ENCODE measurements at regions of chr6 and their contacts with region 1.

Region 1: GRCh38 chr6:143745166-143746133 is 67.7 kb downstream of the PHACTR2 start:
- DNase-seq: no peak

Region 2: GRCh38 chr6:143700684-143701348 is 44.6 kb before region 1 on chr6:
- intact Hi-C with region 1: loop called (anchors 5 kb)
- DNase-seq: no peak

Region 3: DNA sequence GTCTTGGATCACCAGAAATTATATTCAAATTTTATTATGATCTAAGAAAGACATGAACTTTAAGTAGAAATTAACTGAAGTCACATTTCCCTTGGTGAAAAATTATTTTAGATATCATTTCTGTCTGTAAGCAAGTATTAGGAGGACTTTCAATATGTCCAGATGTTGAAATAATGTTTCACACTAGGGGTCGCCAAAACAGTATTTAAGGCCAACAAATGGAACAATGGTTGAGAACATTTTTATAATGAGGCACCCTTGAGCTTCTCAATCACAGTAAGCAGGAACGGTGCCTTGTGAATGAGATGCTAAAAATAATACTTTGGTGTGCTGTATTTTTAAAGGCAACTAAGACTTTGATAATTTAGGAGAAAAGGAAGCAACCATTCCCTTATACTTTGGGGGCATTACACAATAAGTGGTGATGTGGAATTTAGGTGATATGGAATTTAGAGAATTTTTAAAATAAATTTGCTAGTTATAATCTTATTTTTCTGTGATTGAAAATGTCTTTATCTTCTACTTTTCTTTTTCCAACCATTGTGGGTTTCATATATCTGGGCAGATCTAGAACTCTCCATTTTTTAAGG is 359.5 kb after region 1 on chr6:
- intact Hi-C with region 1: no loop called
- DNase-seq: no peak

Measured in cardiac septum (tissue), 1 donor.